Aorta (tissue), 5 donors: ENCODE measurements at regions of chr16 and their contacts with region 1.

Region 1: DNA sequence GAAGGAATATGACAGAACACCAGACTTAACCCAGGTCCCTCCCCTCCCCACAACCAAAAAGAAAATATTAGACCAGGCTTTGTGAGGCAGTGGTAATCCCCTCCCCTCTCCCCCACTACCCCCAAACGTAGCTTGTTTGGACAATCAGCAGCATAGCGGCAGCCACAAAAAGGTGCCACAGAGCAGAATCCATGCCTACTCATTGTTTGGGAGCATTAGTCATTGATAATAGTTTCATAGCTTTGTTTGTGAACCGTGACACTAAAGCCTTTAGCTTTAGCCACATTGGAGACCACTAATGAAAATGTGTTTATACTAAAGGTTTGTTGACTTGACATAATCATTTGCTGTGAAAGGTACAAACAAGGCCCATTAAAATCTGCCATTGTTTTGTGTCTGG is 65.1 kb downstream of the NUP93 start:
- DNase-seq: no peak
- ATAC-seq: no peak
- H3K4me3 ChIP-seq: no peak overlapping the region
- H3K27ac ChIP-seq: no peak overlapping the region
- H3K4me1 ChIP-seq: no peaks in the 10 kb centered on the region
- H3K27me3 ChIP-seq: no peaks in the 10 kb centered on the region

Region 2: DNA sequence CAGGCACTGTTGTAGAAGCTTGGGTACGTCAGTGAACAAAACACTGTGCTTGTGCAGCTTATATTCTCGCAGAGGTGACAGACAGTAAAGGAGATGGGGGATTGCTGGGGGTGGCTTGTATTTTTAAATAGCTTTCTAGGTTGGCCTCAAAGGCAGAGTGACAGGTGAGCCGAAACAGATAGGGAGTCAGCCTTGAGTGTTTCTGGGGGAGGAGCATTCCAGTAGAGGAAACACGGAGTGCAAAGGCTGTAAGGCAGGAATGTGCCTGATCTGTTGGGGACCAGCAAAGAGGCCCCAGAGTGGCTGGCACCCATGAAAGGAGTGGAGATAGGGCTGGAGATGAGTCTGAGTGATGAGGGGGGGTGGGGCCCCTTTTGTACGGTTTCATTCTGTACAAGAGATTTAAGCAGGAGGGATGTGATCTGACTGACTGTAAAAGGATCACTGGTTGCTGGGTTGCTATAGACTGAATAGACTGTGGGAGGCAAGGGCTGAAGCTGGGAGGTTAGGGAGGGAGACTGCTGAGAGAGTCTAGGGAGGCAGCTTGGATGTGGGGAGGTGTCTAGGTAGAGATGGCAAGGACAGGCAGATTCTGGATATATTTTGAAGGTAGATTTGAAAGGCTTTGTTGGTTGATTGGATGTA is 49.9 kb before region 1 on chr16:
- intact Hi-C with region 1: loop called in 1 of 2 experiments (anchors 5 kb)
- DNase-seq: no peak
- ATAC-seq: no peak
- H3K4me3 ChIP-seq: no peak overlapping the region
- H3K27ac ChIP-seq: peak overlapping the region in 1 of 2 donors; percentile 60
- H3K4me1 ChIP-seq: peaks cover 2 to 6% of the 10 kb centered on the region in 2 donors
- H3K27me3 ChIP-seq: no peaks in the 10 kb centered on the region

Region 3: GRCh38 chr16:56898847-56899246 is 103.8 kb after region 1 on chr16:
- intact Hi-C with region 1: no loop called
- DNase-seq: no peak
- ATAC-seq: no peak
- H3K4me3 ChIP-seq: no peak overlapping the region
- H3K27ac ChIP-seq: no peak overlapping the region
- H3K4me1 ChIP-seq: no peaks in the 10 kb centered on the region
- H3K27me3 ChIP-seq: no peaks in the 10 kb centered on the region